Heart left ventricle (tissue), 16 donors: ENCODE measurements at regions of chr19 and their contacts with region 1.

Region 1: DNA sequence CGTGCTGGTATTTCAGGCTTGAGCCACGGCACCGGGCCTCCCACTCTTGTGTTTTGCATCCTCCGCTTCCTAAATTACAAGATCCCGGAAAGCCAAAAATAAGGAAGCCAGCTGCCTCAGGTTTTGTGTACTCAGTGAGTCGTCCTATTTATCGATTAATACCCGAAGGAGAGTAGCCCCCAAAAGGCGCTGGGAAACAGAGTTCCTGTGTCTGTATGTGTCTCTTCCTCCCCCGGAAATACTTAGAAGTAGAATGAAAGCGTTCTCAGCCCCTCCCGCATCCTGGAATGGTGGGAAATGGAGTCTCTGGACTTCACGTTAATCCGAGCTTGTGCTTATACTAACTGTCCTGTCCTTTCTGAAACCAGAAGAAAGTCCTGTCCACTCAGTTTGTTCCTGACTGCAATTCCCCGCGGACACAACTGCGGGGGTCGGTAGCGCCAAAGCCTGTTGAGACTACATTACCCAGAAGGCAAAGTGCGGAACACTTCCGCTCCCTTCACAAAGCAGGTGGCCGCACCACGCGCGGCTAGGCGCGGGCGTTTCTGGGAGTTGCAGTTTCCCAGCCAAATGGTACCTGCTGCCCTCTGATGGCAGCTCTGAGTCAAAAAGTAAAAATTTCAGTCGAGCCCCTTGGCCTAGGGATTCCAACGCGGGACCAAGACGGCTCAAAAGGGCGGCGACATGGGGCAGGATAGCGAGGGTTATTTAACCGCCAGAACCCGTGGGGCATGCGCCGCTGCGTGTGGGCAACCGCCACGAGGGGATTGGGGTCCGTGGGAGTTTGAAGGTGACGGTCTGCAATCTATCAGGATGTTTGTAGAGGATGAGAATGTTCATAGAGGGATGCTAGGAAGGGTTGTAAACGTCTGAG is 2.2 kb upstream of the GSK3A start:
- DNase-seq: peak; percentile 92 to 95 (median 95)
- ATAC-seq: peak; percentile 28 to 53 (median 46)
- H3K4me3 ChIP-seq: peak overlapping the region; percentile 49 to 94 (median 84)
- H3K27ac ChIP-seq: peak overlapping the region; percentile 65 to 99 (median 92)
- H3K4me1 ChIP-seq: peaks cover 15 to 82% (median 61%) of the 10 kb centered on the region in 12 donors
- H3K27me3 ChIP-seq: no peaks in the 10 kb centered on the region
- CTCF ChIP-seq: peak; percentile 48 to 88 (median 62)
- POLR2A ChIP-seq: peak; percentile 17 to 43

Region 2: GRCh38 chr19:42207767-42208271 is 36.8 kb before region 1 on chr19:
- intact Hi-C with region 1: no loop called
- DNase-seq: peak in 1 of 5 donors; percentile 24
- ATAC-seq: peak in 1 of 4 donors; percentile 43
- H3K4me3 ChIP-seq: no peak overlapping the region
- H3K27ac ChIP-seq: peak overlapping the region in 1 of 12 donors; percentile 67
- H3K4me1 ChIP-seq: peaks cover 0 to 51% (median 0%) of the 10 kb centered on the region in 12 donors
- H3K27me3 ChIP-seq: no peaks in the 10 kb centered on the region
- CTCF ChIP-seq: no peak
- POLR2A ChIP-seq: no peak

Region 3: DNA sequence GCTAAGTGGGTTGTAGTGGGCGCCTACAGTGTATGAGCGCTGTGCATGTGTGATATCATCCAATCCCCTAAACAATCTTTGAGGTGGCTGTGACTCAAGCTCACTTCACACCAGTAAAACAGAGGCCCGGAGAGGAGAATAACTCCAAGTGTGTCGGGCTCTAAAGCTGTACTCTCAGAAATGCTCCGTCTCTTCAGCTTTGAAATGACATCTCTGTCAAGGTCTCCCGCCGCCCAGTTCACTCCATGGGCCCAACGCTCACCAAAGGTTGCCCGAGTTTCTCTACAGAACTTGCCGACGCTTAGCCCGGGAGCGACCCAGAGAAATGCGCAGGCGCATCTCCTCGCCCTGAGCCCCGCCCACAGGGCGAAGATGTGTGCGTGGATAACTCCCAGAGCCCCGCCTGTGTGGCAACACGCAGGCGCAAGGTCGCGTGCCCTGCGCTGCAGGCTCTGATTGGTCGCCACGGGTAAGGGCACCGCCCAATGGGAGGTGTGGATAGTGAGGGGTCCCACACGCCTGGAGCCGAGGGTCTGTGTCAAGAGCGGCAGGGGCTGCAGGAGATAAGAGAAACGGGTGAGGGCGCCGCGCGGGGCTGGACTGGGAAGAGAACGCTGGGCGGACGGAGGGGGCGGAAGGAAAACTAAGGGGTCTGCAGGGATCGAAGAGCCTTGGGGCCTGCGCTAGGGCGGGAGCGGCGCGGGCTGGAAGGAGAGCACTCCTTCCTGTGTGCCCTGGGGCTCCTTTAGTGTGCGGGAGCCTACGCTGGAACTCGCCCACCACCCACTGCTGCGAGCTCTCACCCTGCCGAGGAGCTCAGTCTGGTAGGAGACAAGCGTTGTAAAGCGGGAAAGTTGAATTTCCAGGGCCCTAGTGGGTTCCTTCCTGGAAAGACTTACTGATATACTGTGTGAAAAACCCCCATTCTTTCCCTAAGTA is 24.5 kb before region 1 on chr19 and contains the start of gene ZNF526:
- intact Hi-C with region 1: loop called in 2 of 10 experiments (anchors 1 to 2 kb)
- DNase-seq: peak; percentile 96 to 99 (median 98)
- ATAC-seq: peak; percentile 92 to 96 (median 94)
- H3K4me3 ChIP-seq: peak within 1 kb of the TSS; percentile 64 to 98 (median 89)
- H3K27ac ChIP-seq: peak within 1 kb of the TSS in 11 of 12 donors; percentile 50 to 93 (median 80)
- H3K4me1 ChIP-seq: peaks cover 0 to 60% (median 34%) of the 10 kb centered on the region in 12 donors
- H3K27me3 ChIP-seq: no peaks in the 10 kb centered on the region
- CTCF ChIP-seq: peak in 1 of 12 donors; percentile 5
- POLR2A ChIP-seq: peak in 1 of 2 donors; percentile 83
- total RNA-seq, gene ZNF526: 3.9 to 7.2 (median 5.8) TPM

Region 4: GRCh38 chr19:42283143-42284065 is 38.8 kb after region 1 on chr19:
- intact Hi-C with region 1: loop called in 9 of 10 experiments (anchors 1 to 5 kb)
- DNase-seq: peak; percentile 97 to 98 (median 98)
- ATAC-seq: peak; percentile 49 to 76 (median 70)
- H3K4me3 ChIP-seq: peak overlapping the region; percentile 21 to 86 (median 60)
- H3K27ac ChIP-seq: peak overlapping the region; percentile 95 to 100 (median 96)
- H3K4me1 ChIP-seq: peaks cover 23 to 75% (median 65%) of the 10 kb centered on the region in 12 donors
- H3K27me3 ChIP-seq: no peaks in the 10 kb centered on the region
- CTCF ChIP-seq: peak in 2 of 12 donors; percentile 11 to 13
- POLR2A ChIP-seq: peak in 1 of 2 donors; percentile 46

Region 5: DNA sequence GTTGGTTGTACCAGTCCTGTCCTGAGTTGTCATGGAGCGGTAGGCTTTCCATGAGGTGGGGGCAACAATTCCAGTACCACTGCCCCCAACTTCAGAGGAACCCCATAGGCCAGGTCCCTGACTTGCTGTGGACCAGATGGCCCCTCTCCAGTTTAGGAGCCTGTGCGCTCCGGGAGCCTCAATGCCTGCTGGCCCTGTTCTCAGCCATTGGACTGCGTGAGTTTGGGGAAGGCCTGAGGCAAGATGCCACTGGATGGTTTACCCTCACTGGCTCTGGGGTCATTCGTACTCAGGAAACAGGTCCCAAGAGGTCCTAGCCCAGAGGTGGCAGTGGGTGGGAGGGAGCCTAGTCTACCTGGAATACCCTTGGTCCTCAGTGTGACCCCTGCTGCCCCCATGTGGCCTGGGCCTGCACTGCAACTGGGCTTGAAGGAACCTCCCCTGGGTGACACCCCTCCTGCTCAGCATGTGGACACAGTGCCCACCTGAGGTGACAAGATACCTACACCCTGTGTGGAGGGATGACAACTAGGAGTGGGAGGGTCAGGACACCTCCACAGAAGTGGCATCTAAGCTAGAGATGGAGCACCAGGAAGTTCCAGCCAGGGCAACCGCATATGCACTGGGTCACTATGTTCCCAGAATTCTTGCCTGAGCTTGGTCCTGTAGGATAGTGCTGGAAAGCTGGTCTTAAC is 51.4 kb after region 1 on chr19:
- intact Hi-C with region 1: loop called in 4 of 10 experiments (anchors 1 to 5 kb)
- DNase-seq: peak; percentile 76 to 90 (median 82)
- ATAC-seq: peak; percentile 42 to 84 (median 77)
- H3K4me3 ChIP-seq: no peak overlapping the region
- H3K27ac ChIP-seq: no peak overlapping the region
- H3K4me1 ChIP-seq: no peaks in the 10 kb centered on the region
- H3K27me3 ChIP-seq: no peaks in the 10 kb centered on the region
- CTCF ChIP-seq: peak; percentile 89 to 97 (median 94)
- POLR2A ChIP-seq: no peak

Region 6: DNA sequence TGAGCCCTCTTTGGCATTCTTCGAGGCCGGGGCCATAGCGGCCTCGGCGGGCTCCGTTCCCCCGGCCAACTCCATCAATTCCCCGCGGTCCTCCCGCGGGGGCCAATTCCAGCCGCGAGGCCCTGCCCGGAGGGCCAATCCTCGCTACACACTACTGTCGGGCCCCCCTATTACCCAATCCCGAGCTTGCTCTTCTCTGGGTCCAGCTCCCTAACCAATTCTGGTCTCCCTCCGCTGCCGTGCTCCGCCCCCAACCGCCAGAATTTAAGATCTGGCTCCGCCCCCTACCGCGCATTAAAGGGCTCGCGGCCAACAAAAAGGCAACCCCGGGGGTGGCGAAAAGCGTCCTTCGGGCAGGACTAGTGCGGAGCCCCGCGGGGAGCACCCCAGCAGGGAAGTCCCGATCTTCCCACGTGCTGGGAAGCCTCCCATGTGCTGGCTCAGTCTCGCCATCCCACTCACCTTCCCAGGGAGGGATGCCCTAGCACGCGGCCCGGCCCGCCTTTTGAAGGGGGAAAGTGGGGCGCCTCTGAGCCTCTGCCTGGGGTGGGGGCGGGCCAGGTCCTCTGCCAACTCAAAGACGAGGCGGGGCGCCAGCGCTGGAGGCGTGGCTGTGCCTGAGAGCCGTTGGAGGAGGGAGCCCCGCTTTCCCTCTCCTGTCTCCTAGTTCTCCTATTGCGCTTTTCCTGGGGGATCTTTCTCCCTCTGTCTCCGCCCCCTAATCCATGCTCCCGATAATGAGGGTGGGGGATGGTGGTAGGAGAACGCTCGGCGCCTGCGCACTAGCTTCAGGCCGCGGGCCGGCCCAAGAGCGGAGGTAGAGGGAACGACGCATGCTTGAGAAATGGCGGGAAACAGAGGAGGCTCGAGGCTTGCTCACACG is 179.1 kb after region 1 on chr19:
- intact Hi-C with region 1: loop called in 3 of 10 experiments (anchors 5 to 10 kb)
- DNase-seq: peak; percentile 89 to 95 (median 92)
- ATAC-seq: peak; percentile 86 to 92 (median 89)
- H3K4me3 ChIP-seq: peak overlapping the region; percentile 43 to 93 (median 76)
- H3K27ac ChIP-seq: peak overlapping the region; percentile 73 to 97 (median 85)
- H3K4me1 ChIP-seq: peaks cover 0 to 69% (median 41%) of the 10 kb centered on the region in 12 donors
- H3K27me3 ChIP-seq: peaks cover 0 to 10% (median 0%) of the 10 kb centered on the region in 9 donors
- CTCF ChIP-seq: no peak
- POLR2A ChIP-seq: peak; percentile 9 to 69